AG04450 (cell line): ENCODE measurements at regions of chr12 and their contacts with region 1.

Region 1: GRCh38 chr12:130838951-130839769 is at the start of gene STX2:
- DNase-seq: peak; percentile 39
- H3K4me3 ChIP-seq: peak within 1 kb of the TSS; percentile 84
- H3K27ac ChIP-seq: peak within 1 kb of the TSS; percentile 57
- H3K27me3 ChIP-seq: no peaks in the 10 kb centered on the region
- CTCF ChIP-seq: peak; percentile 51
- polyA plus RNA-seq, gene STX2: 32.4 and 42.8 TPM in 2 replicates

Region 2: GRCh38 chr12:130702966-130703732 is 136.0 kb before region 1 on chr12:
- CTCF ChIA-PET with region 1: no interaction called
- POLR2A ChIA-PET with region 1: no interaction called
- DNase-seq: no peak
- H3K4me3 ChIP-seq: no peak overlapping the region
- H3K27ac ChIP-seq: no peak overlapping the region
- H3K27me3 ChIP-seq: no peaks in the 10 kb centered on the region
- CTCF ChIP-seq: no peak

Region 3: DNA sequence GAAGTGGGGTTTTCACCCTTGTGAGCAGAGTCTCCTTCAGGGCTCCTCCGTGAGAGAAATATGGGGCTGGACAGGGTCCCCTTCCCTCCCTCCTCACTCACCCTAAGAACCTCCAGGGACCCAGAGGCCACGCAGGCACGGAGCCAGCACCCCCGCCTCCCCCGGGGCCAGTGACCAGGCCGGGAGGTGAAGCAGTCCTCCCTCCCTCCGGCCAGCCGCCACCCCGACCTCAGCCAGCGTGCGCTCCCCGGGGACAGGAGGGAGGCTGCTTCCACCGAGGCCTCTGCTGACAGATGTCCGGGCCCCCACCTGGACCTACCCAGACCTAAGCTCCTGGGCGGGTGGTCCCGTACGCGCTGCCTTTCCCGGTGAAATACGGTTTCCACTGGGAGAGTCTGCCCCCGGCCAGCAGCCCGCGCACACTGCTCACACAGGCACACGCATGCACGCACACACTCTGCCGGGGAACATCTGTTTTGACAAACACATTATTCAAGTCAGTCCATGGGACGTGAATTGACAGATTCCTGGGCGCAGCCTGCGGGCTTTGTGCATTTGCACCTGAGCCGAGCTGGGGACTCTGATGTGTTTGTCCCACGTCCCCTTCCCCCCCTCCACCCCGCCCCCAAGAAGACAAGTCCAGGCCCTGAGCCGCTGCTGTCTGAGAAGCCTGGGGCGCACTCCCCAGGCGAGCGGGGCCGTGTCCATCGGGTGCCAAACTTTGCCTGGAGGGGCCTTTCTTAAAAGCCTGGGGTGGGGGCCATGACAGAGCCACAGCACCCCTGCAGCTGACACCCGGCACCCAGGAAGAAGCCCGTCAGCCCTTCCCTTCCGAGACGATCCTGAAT is 123.8 kb before region 1 on chr12:
- CTCF ChIA-PET with region 1: no interaction called
- POLR2A ChIA-PET with region 1: interaction called, 10 read pairs
- DNase-seq: no peak
- H3K4me3 ChIP-seq: no peak overlapping the region
- H3K27ac ChIP-seq: no peak overlapping the region
- H3K27me3 ChIP-seq: no peaks in the 10 kb centered on the region
- CTCF ChIP-seq: no peak

Region 4: GRCh38 chr12:130783110-130783715 is 55.9 kb before region 1 on chr12:
- CTCF ChIA-PET with region 1: no interaction called
- POLR2A ChIA-PET with region 1: no interaction called
- DNase-seq: no peak
- H3K4me3 ChIP-seq: no peak overlapping the region
- H3K27ac ChIP-seq: no peak overlapping the region
- H3K27me3 ChIP-seq: no peaks in the 10 kb centered on the region
- CTCF ChIP-seq: no peak

Region 5: GRCh38 chr12:130826149-130826801 is 12.9 kb before region 1 on chr12:
- CTCF ChIA-PET with region 1: interaction called, 46 read pairs
- POLR2A ChIA-PET with region 1: no interaction called
- DNase-seq: peak; percentile 21
- H3K4me3 ChIP-seq: no peak overlapping the region
- H3K27ac ChIP-seq: peak overlapping the region; percentile 57
- H3K27me3 ChIP-seq: no peaks in the 10 kb centered on the region
- CTCF ChIP-seq: peak; percentile 68